IMR-90 (cell line): ENCODE measurements at regions of chr1 and their contacts with region 1.

Region 1: DNA sequence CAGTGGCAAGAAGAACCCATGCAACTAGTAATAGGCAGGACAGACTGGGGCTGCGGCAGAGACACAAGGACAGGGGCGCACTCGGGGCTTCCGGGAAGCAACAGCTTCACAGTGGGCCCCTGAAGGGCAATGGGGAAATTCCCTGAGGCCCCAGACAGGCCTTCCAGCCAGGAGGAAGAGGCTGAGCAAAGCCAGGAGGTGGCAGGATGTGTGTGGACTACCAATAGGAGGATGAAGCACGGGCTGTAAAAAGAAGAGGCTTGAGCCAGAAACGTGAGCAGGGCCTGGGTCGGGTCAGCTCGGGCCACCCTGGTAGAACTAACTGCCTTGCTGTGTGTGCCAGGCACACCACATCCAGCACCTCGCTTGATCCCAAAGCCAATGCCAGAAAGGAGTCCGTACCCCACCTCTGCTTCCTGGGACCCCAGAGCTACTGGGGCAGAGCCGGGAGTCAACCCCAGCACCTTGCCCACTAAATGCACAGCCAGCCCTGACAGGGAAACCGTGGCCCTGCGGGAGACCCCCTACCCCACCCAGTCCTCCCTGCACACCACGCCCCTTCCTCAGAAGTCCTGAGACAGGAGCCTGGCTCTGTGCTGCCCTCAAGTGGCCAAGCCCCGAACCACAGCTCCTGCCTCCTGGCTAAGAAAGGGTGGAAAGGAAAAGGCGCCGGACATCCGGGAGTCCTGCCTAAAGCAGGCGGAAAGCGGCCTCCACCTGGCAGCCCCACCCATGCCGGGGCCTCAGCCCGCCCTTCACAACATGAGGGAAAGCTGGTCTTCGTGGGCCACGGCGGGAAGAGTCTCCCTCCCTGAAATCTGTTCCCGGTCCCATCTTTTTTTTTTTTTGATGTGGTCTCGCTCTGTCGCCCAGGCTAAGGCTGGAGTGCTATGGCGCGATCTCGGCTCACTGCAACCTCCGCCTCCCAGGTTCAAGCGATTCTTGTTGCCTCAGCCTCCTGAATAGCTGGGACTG is 33.7 kb downstream of the TTC39A start:
- DNase-seq: peak; percentile 62
- ATAC-seq: peak; percentile 98
- H3K4me3 ChIP-seq: peak overlapping the region; percentile 11; the same call in 1 of the 2 replicates
- H3K27ac ChIP-seq: no peak overlapping the region
- H3K4me1 ChIP-seq: no peaks in the 10 kb centered on the region
- H3K27me3 ChIP-seq: no peaks in the 10 kb centered on the region
- CTCF ChIP-seq: peak; percentile 90
- POLR2A ChIP-seq: no peak
- RAD21 ChIP-seq: peak; percentile 86

Region 2: GRCh38 chr1:50750021-50750619 is 546.5 kb before region 1 on chr1:
- CTCF ChIA-PET with region 1: interaction called, 11 read pairs
- POLR2A ChIA-PET with region 1: no interaction called
- dilution Hi-C with region 1: no loop called
- in situ Hi-C with region 1: no loop called
- intact Hi-C with region 1: no loop called
- DNase-seq: peak; percentile 36
- ATAC-seq: peak; percentile 88
- H3K4me3 ChIP-seq: no peak overlapping the region
- H3K27ac ChIP-seq: no peak overlapping the region
- H3K4me1 ChIP-seq: peaks cover 2% of the 10 kb centered on the region; the same call in 1 of the 2 replicates
- H3K27me3 ChIP-seq: no peaks in the 10 kb centered on the region
- CTCF ChIP-seq: peak; percentile 53
- POLR2A ChIP-seq: no peak
- RAD21 ChIP-seq: peak; percentile 64

Region 3: GRCh38 chr1:50929376-50929958 is 367.2 kb before region 1 on chr1:
- CTCF ChIA-PET with region 1: no interaction called
- POLR2A ChIA-PET with region 1: no interaction called
- dilution Hi-C with region 1: no loop called
- in situ Hi-C with region 1: loop called (anchors 10 kb)
- intact Hi-C with region 1: loop called (anchors 5 kb)
- DNase-seq: peak; percentile 59
- ATAC-seq: peak; percentile 54; the same call in 1 of the 2 replicates
- H3K4me3 ChIP-seq: no peak overlapping the region
- H3K27ac ChIP-seq: no peak overlapping the region
- H3K4me1 ChIP-seq: peaks cover 2% of the 10 kb centered on the region; the same call in 1 of the 2 replicates
- H3K27me3 ChIP-seq: no peaks in the 10 kb centered on the region
- CTCF ChIP-seq: peak; percentile 61
- POLR2A ChIP-seq: no peak
- RAD21 ChIP-seq: peak; percentile 52

Region 4: GRCh38 chr1:50968158-50968820 is 328.4 kb before region 1 on chr1:
- CTCF ChIA-PET with region 1: no interaction called
- POLR2A ChIA-PET with region 1: no interaction called
- dilution Hi-C with region 1: no loop called
- in situ Hi-C with region 1: no loop called
- intact Hi-C with region 1: loop called (anchors 10 kb)
- DNase-seq: peak; percentile 89
- ATAC-seq: peak; percentile 86
- H3K4me3 ChIP-seq: peak overlapping the region; percentile 88
- H3K27ac ChIP-seq: peak overlapping the region; percentile 95
- H3K4me1 ChIP-seq: no peaks in the 10 kb centered on the region
- H3K27me3 ChIP-seq: no peaks in the 10 kb centered on the region
- CTCF ChIP-seq: peak; percentile 42
- POLR2A ChIP-seq: peak; percentile 71
- RAD21 ChIP-seq: no peak